Activated naive CD4-positive, alpha-beta T cell treated with anti-CD3 and anti-CD28 coated beads, Interleukin-2, amount 10 ng/mL, durations not matched to agents 7 days and 5 days (primary cell): ENCODE measurements at regions of chr12 and their contacts with region 1.

Region 1: GRCh38 chr12:123043536-123044001 is 63.1 kb downstream of the ARL6IP4 start:
- DNase-seq: peak; percentile 86
- H3K4me3 Mint-ChIP-seq: no peak overlapping the region
- H3K27ac Mint-ChIP-seq: peak overlapping the region; percentile 45
- H3K4me1 Mint-ChIP-seq: peaks cover 30% of the 10 kb centered on the region
- H3K27me3 Mint-ChIP-seq: no peaks in the 10 kb centered on the region

Region 2: DNA sequence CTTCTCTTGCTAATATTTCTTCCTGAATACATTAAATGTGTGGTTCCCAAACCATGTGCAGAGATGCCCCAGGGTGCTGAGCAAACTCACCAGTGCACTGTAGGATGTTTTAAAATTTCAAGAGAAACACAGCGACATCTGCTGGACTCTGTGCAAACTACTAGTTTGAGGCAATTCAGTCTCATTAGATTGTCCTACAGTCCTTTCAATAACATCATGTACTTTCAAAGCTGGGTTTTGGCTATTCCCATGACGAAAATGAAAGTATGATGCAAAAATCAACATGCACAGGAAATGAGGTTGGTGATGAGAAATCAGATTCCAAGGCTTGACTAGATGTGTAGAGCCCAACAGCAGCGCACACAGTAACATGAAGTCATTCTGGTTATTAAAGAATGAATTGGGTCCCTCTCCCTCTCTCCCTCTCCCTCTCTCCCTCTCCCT is 687.4 kb before region 1 on chr12:
- CTCF ChIA-PET with region 1: no interaction called
- DNase-seq: peak; percentile 73
- H3K4me3 Mint-ChIP-seq: no peak overlapping the region
- H3K27ac Mint-ChIP-seq: peak overlapping the region; percentile 71
- H3K4me1 Mint-ChIP-seq: peaks cover 7% of the 10 kb centered on the region
- H3K27me3 Mint-ChIP-seq: no peaks in the 10 kb centered on the region

Region 3: DNA sequence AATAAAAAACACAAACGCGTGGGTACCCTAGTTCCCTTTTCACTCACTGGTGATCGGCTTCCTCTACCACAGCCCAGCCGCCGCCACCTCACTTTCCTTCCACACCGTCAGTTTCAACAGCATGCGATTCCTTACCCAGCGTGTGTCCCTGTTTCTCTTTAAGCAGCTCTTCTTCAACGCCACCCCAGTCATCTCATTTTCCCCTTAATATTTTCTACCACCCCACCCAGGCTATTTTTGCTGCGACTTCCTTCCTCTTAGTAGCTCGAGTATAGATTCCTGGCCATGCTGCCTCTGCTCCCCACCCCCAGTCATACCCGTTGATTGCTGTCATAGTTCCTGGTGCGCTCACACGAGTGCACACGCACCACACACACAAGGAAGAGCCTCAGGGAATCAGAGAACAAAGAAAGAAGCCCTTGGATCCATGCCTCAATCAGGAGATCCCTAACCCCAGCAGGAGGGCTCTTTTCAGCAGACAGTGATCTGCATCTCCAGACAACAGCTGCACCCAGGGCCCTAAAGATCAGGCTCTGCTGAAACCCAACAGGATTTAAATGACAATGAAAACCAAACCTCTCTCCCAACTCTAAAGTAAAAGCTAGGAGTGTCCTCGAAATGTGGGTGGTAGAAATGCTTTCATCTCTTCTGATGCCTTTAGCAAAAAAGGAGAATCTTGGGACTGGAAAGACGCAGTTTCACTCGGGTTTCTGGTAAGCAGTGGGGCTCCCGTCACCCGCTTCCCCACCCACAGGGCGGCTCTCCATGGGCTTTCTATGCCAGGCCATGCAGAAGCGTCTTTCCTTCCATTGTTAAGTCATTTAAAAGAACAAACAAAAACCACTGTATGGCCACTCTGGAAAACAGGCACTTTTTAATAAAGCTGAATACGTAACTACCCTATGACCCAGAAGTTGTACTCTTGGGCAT is 171.5 kb before region 1 on chr12:
- CTCF ChIA-PET with region 1: no interaction called
- DNase-seq: peak; percentile 64
- H3K4me3 Mint-ChIP-seq: peak overlapping the region; percentile 73
- H3K27ac Mint-ChIP-seq: peak overlapping the region; percentile 84
- H3K4me1 Mint-ChIP-seq: peaks cover 68% of the 10 kb centered on the region
- H3K27me3 Mint-ChIP-seq: no peaks in the 10 kb centered on the region

Region 4: DNA sequence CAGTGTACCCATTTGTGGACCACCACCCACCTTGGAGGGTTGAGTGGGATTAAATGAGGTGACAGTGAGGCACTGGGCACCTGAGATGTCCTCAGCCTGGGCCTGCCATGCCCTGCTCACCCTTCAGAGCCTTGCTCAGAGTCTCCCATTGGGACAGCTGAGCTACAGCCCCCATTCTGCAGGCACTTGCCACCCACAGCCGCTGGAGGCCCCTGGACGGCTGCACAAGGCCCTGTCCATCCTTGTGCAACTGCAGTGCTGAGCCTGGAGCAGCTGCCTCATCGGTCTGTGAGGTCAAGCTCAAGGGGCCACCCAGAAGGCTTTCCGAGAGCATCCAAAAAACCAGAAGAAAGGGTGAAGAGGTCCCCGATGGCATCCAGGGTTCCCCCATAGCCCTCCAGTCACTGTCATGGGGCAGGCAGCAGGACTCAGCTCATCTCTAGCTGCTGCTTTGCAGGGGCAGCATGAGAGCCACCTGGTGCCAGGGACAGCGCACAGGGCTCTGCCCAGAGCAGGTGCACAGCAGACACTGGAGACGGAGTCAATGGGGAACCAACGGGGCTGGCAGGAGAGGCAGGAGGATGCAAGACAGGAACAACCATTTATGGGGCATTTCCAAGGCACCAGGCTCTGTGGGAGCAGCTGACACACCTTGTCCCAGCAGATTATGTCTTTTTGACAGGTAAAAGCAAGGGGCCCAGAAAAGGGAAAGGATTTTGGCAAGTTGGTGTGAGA is 21.5 kb after region 1 on chr12:
- CTCF ChIA-PET with region 1: interaction called, 10 read pairs
- DNase-seq: no peak
- H3K4me3 Mint-ChIP-seq: no peak overlapping the region
- H3K27ac Mint-ChIP-seq: no peak overlapping the region
- H3K4me1 Mint-ChIP-seq: peaks cover 28% of the 10 kb centered on the region
- H3K27me3 Mint-ChIP-seq: no peaks in the 10 kb centered on the region